H1 (cell line): ENCODE measurements at regions of chr4 and their contacts with region 1.

Region 1: DNA sequence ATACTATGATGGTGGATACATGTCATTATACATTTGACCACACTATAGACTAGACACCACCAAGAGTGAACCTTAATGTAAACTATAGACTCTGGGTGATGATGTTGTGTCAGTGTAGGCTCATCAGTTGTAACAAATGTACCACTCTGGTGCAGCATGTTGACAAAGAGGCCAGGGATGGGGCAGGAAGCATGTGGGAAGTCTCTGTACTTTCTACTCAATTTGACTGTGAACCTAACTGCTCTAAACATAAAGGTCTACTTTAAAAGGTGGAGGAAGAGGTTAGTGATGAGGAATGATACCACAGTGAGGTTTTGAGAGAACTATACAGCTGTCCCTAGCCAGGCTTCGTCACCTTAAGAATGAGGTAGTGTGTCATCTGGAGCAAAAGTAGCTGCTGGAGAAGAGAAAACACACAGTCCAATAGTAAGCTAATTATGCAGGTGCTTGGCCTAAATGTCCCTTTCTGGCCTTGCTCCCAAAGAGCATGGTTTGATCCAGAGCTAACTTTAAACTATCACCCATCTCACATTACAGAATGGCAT is 38.4 kb downstream of the GRSF1 start:
- DNase-seq: no peak
- H3K4me3 ChIP-seq: no peak overlapping the region
- H3K27ac ChIP-seq: no peak overlapping the region
- H3K4me1 ChIP-seq: no peaks in the 10 kb centered on the region
- H3K27me3 ChIP-seq: no peaks in the 10 kb centered on the region
- CTCF ChIP-seq: no peak
- EP300 ChIP-seq: no peak
- POLR2A ChIP-seq: no peak
- RAD21 ChIP-seq: no peak

Region 2: GRCh38 chr4:70746179-70746839 is 55.0 kb before region 1 on chr4:
- CTCF ChIA-PET with region 1: no interaction called
- POLR2A ChIA-PET with region 1: no interaction called
- DNase-seq: no peak
- H3K4me3 ChIP-seq: no peak overlapping the region
- H3K27ac ChIP-seq: no peak overlapping the region
- H3K4me1 ChIP-seq: peaks cover 0 to 3% (median 0%) of the 10 kb centered on the region in 4 experiments; a peak in 2 of 7 replicates
- H3K27me3 ChIP-seq: no peaks in the 10 kb centered on the region
- CTCF ChIP-seq: no peak
- EP300 ChIP-seq: no peak
- POLR2A ChIP-seq: no peak
- RAD21 ChIP-seq: no peak

Region 3: GRCh38 chr4:70818173-70818855 is 17.0 kb after region 1 on chr4:
- CTCF ChIA-PET with region 1: interaction called, 4 read pairs
- POLR2A ChIA-PET with region 1: interaction called, 17 read pairs
- DNase-seq: no peak
- H3K4me3 ChIP-seq: no peak overlapping the region
- H3K27ac ChIP-seq: no peak overlapping the region
- H3K4me1 ChIP-seq: no peaks in the 10 kb centered on the region
- H3K27me3 ChIP-seq: no peaks in the 10 kb centered on the region
- CTCF ChIP-seq: no peak
- EP300 ChIP-seq: no peak
- POLR2A ChIP-seq: no peak
- RAD21 ChIP-seq: no peak